ENCODE measurements at regions of chr12 and their contacts with region 1.

Region 1: GRCh38 chr12:120086801-120087621 is 29.5 kb downstream of the RAB35 start:
- DNase-seq: peak; percentile 97 to 98
- ATAC-seq: peak; percentile 97 to 99 (median 98)
- H3K4me3 ChIP-seq: peak overlapping the region in 9 of 10 donors; percentile 29 to 59 (median 51)
- H3K27ac ChIP-seq: peak overlapping the region; percentile 27 to 78 (median 74)
- H3K4me1 ChIP-seq: peaks cover 2 to 18% (median 13%) of the 10 kb centered on the region in 9 donors
- H3K27me3 ChIP-seq: no peaks in the 10 kb centered on the region
- CTCF ChIP-seq: peak; percentile 94 to 99 (median 98)

Region 2: GRCh38 chr12:119988782-119989668 is 98.0 kb before region 1 on chr12 and contains the start of gene BICDL1:
- intact Hi-C with region 1: loop called in 1 of 10 experiments (anchors 5 kb)
- DNase-seq: peak; percentile 12 to 42
- ATAC-seq: peak; percentile 38 to 77 (median 58)
- H3K4me3 ChIP-seq: peak within 1 kb of the TSS; percentile 4 to 59 (median 54)
- H3K27ac ChIP-seq: peak within 1 kb of the TSS in 1 of 10 donors; percentile 44
- H3K4me1 ChIP-seq: peaks cover 4 to 17% (median 13%) of the 10 kb centered on the region in 9 donors
- H3K27me3 ChIP-seq: peaks cover 0 to 87% (median 71%) of the 10 kb centered on the region in 7 donors
- CTCF ChIP-seq: peak in 1 of 9 donors; percentile 0
- total RNA-seq, gene BICDL1: 0.10 to 1.5 (median 0.34) TPM in 8 of 10 donors, not detected in the others

Region 3: DNA sequence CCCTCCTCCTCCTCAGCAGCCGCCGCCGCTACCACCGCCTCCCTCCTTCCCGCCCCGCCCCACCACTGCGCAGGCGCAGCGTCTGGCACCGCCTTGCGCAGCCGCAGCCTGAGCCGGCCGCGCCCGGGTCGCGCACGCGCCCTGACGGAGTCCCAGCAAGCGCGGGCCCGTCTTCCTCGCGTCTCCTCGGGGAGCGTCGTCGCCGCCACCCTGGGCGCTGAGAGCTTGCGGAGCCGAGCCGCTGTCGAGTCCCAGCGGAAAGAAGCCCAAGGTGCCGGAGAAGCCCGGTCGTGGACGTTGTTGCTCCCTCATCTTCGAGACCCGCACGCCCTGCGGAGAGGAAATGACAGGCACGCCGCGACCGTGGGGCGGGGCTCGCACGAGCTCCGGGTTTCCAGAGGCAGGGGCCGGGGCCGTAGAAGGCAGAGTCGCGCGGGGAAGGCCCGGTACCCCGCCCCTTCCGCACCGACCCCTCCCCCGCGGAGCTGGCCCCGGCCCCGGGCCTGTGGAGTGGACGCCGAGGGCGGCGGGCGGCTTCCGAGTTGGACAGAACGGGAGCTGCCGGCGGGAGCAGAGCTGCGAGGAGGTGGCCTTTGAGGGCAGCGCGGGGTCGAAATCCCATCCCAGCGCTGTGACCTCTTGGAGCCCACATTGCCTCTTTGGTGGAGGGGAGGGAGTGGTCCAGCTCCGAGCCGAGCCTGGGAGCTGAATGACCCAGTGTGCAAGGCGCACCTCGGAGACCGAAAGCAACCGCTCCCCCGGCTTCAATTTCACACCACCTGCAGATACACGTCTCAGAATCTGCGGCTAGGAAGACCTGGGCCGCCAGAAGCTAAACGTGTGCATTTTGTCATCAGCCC is 30.0 kb after region 1 on chr12:
- intact Hi-C with region 1: loop called in 1 of 10 experiments (anchors 2 kb)
- DNase-seq: peak; percentile 95 to 97
- ATAC-seq: peak; percentile 92 to 98 (median 95)
- H3K4me3 ChIP-seq: peak overlapping the region; percentile 67 to 93 (median 82)
- H3K27ac ChIP-seq: peak overlapping the region; percentile 93 to 99 (median 96)
- H3K4me1 ChIP-seq: peaks cover 13 to 77% (median 44%) of the 10 kb centered on the region in 9 donors
- H3K27me3 ChIP-seq: no peaks in the 10 kb centered on the region
- CTCF ChIP-seq: no peak

Region 4: GRCh38 chr12:120301962-120302815 is 215.2 kb after region 1 on chr12 and contains the start of gene SIRT4:
- intact Hi-C with region 1: no loop called
- DNase-seq: peak; percentile 79 to 94
- ATAC-seq: peak; percentile 88 to 98 (median 98)
- H3K4me3 ChIP-seq: peak within 1 kb of the TSS; percentile 46 to 82 (median 64)
- H3K27ac ChIP-seq: peak within 1 kb of the TSS; percentile 27 to 90 (median 79)
- H3K4me1 ChIP-seq: peaks cover 0 to 8% (median 6%) of the 10 kb centered on the region in 9 donors
- H3K27me3 ChIP-seq: no peaks in the 10 kb centered on the region
- CTCF ChIP-seq: peak; percentile 72 to 94 (median 88)
- total RNA-seq, gene SIRT4: 3.7 to 9.0 (median 4.7) TPM

Measured in heart right ventricle (tissue), 16 donors.